CD4-positive, alpha-beta memory T cell (primary cell): ENCODE measurements at regions of chr1 and their contacts with region 1.

Region 1: DNA sequence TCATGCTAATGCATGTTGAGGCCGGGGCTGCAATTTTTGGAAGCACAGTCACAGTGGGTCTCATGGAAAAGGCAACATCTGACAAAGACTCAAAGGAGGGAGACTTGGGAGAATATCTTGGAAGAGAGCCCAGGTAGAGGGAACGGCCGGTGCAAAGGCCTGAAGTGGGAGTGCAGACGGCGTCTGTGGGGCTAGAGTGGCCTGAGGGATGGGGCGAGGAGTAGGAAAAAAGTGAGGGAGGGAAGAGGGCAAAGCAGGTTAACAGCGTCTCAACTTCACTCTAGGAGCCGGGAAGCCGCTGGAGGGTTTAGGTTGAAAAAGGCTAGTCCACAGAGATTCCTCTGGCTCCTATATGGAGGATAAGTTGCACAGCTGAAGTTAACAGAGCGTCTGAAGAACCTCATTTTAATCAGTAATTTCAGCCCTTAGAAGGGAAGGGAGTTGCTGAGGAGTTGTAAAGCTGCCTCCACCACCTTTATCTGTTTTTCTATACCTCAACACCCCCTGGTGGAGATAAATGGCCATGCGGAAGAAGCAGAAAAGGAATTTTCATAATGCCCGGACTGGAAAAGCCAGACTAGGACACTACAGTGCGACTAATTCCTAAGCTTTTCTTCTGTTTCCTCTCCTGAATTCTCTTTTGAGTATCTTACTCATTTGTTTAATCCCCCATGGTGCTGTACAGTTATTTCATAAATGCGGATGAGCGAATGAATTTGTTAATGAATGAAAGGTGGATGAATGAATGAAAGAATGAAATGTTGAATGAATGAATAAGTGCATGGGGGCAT is 78.7 kb upstream of the ZNF281 start:
- DNase-seq: peak in 4 of 5 donors; percentile 42 to 54 (median 52)
- H3K4me3 ChIP-seq: no peak overlapping the region
- H3K4me3 Mint-ChIP-seq: no peak overlapping the region
- H3K27ac ChIP-seq: no peak overlapping the region
- H3K27ac Mint-ChIP-seq: no peak overlapping the region
- H3K4me1 ChIP-seq: no peaks in the 10 kb centered on the region
- H3K4me1 Mint-ChIP-seq: peaks cover 0 to 5% (median under 1%) of the 10 kb centered on the region in 4 donors
- H3K27me3 ChIP-seq: no peaks in the 10 kb centered on the region
- H3K27me3 Mint-ChIP-seq: peaks cover 6 to 14% of the 10 kb centered on the region in 2 donors

Region 2: GRCh38 chr1:198858033-198858432 is 1630.5 kb before region 1 on chr1:
- CTCF ChIA-PET with region 1: no interaction called
- POLR2A ChIA-PET with region 1: no interaction called
- intact Hi-C with region 1: no loop called
- DNase-seq: no peak
- H3K4me3 ChIP-seq: no peak overlapping the region
- H3K4me3 Mint-ChIP-seq: no peak overlapping the region
- H3K27ac ChIP-seq: no peak overlapping the region
- H3K27ac Mint-ChIP-seq: no peak overlapping the region
- H3K4me1 ChIP-seq: no peaks in the 10 kb centered on the region
- H3K4me1 Mint-ChIP-seq: no peaks in the 10 kb centered on the region
- H3K27me3 ChIP-seq: no peaks in the 10 kb centered on the region
- H3K27me3 Mint-ChIP-seq: no peaks in the 10 kb centered on the region

Region 3: GRCh38 chr1:198892065-198892464 is 1596.5 kb before region 1 on chr1:
- CTCF ChIA-PET with region 1: no interaction called
- POLR2A ChIA-PET with region 1: no interaction called
- intact Hi-C with region 1: no loop called
- DNase-seq: no peak
- H3K4me3 ChIP-seq: no peak overlapping the region
- H3K4me3 Mint-ChIP-seq: no peak overlapping the region
- H3K27ac ChIP-seq: no peak overlapping the region
- H3K27ac Mint-ChIP-seq: no peak overlapping the region
- H3K4me1 ChIP-seq: no peaks in the 10 kb centered on the region
- H3K4me1 Mint-ChIP-seq: no peaks in the 10 kb centered on the region
- H3K27me3 ChIP-seq: no peaks in the 10 kb centered on the region
- H3K27me3 Mint-ChIP-seq: no peaks in the 10 kb centered on the region

Region 4: DNA sequence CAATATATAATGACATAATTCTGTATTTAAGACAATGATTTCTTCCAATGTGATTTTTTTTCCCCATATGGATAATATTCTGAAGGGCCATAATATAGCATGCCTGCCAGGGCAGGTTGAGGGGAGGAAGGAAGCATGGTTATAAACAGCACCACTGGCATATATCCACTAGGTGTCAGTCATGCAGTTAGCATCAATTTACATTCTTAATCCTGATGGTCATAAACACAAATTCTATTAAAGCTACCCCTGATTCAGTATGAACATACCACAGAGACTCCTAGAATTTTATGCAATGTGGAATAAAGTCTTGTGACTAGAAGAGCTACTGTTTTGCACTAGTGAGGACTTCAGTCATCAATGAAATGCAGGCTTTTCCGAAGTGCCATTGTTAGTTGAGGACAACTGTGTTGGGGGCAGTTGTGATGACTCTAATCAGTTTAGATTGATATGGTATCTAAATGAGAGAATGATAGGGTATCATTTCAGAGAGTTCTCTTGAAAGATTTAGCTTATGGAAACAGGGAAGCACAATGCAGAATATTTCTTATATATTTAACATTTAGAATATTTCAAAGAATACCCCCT is 803.8 kb before region 1 on chr1:
- CTCF ChIA-PET with region 1: interaction called, 12 read pairs
- POLR2A ChIA-PET with region 1: no interaction called
- intact Hi-C with region 1: no loop called
- DNase-seq: peak in 4 of 5 donors; percentile 23 to 34 (median 32)
- H3K4me3 ChIP-seq: no peak overlapping the region
- H3K4me3 Mint-ChIP-seq: no peak overlapping the region
- H3K27ac ChIP-seq: no peak overlapping the region
- H3K27ac Mint-ChIP-seq: no peak overlapping the region
- H3K4me1 ChIP-seq: no peaks in the 10 kb centered on the region
- H3K4me1 Mint-ChIP-seq: no peaks in the 10 kb centered on the region
- H3K27me3 ChIP-seq: no peaks in the 10 kb centered on the region
- H3K27me3 Mint-ChIP-seq: peaks cover 6 to 7% of the 10 kb centered on the region in 2 donors

Region 5: GRCh38 chr1:200099040-200099439 is 389.5 kb before region 1 on chr1:
- CTCF ChIA-PET with region 1: no interaction called
- POLR2A ChIA-PET with region 1: no interaction called
- intact Hi-C with region 1: loop called (anchors 1 kb)
- DNase-seq: no peak
- H3K4me3 ChIP-seq: no peak overlapping the region
- H3K4me3 Mint-ChIP-seq: no peak overlapping the region
- H3K27ac ChIP-seq: no peak overlapping the region
- H3K27ac Mint-ChIP-seq: no peak overlapping the region
- H3K4me1 ChIP-seq: no peaks in the 10 kb centered on the region
- H3K4me1 Mint-ChIP-seq: no peaks in the 10 kb centered on the region
- H3K27me3 ChIP-seq: no peaks in the 10 kb centered on the region
- H3K27me3 Mint-ChIP-seq: peaks cover 1% of the 10 kb centered on the region in 2 donors

Region 6: DNA sequence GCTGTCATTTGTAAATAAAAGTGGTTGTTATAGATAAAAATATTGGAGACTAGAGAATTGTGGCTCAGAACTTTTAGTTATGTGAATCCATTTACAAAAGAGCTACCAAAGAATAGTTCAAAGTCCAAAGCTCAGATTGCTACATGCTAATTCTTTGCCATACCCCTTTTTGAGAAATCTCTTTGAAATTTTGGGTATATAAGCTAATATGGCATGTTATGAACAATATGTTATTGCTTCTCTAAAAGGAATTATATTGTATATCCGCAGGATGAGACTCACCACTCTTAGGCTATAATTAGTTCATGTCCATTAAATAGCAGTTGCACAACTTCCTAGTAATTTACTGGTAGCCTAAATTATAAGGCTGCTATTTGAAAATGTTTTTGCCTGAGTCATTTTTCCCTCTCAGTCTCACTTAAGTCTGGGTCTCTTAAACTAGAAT is 256.8 kb before region 1 on chr1:
- CTCF ChIA-PET with region 1: no interaction called
- POLR2A ChIA-PET with region 1: no interaction called
- intact Hi-C with region 1: no loop called
- DNase-seq: no peak
- H3K4me3 ChIP-seq: no peak overlapping the region
- H3K4me3 Mint-ChIP-seq: no peak overlapping the region
- H3K27ac ChIP-seq: no peak overlapping the region
- H3K27ac Mint-ChIP-seq: no peak overlapping the region
- H3K4me1 ChIP-seq: peaks cover 3% of the 10 kb centered on the region
- H3K4me1 Mint-ChIP-seq: peaks cover 2 to 8% (median 4%) of the 10 kb centered on the region in 4 donors
- H3K27me3 ChIP-seq: no peaks in the 10 kb centered on the region
- H3K27me3 Mint-ChIP-seq: peaks cover 4 to 7% of the 10 kb centered on the region in 2 donors

Region 7: GRCh38 chr1:200258447-200259375 is 229.9 kb before region 1 on chr1:
- CTCF ChIA-PET with region 1: no interaction called
- POLR2A ChIA-PET with region 1: no interaction called
- intact Hi-C with region 1: loop called (anchors 1 kb)
- DNase-seq: peak in 2 of 5 donors; percentile 4 to 12
- H3K4me3 ChIP-seq: no peak overlapping the region
- H3K4me3 Mint-ChIP-seq: no peak overlapping the region
- H3K27ac ChIP-seq: no peak overlapping the region
- H3K27ac Mint-ChIP-seq: no peak overlapping the region
- H3K4me1 ChIP-seq: no peaks in the 10 kb centered on the region
- H3K4me1 Mint-ChIP-seq: peaks cover 0 to 4% (median 0%) of the 10 kb centered on the region in 4 donors
- H3K27me3 ChIP-seq: no peaks in the 10 kb centered on the region
- H3K27me3 Mint-ChIP-seq: peaks cover 0 to 12% of the 10 kb centered on the region in 2 donors

Region 8: DNA sequence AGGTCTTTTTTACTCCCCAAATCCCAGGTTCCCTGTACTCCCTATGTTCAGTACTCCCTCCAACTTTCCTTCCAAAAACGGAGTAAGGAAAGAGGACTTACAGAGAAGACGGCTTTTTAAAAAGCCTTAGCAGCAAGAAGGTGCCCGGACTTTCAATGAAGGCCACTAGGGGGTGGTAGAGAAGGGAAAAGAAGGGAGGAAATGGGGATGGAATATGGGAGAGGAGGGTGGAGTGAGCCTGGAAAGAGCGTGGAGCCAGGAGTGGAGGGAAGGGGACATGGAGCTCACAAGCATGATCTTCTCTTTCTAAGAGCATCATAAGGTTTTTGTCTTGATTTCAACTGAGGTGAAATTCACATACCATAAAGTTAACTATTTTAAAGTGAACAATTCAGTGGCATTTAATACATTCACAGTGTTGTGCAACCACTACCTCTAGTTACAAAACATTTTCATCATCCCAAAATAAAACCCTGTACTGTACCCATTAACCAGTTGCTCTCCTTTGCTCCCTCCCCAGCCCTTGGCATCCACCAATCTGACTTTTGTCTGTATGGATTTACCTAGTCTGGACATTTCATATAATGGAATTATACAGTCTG is 208.7 kb before region 1 on chr1:
- CTCF ChIA-PET with region 1: interaction called, 48 read pairs
- POLR2A ChIA-PET with region 1: no interaction called
- intact Hi-C with region 1: loop called (anchors 1 kb)
- DNase-seq: peak in 4 of 5 donors; percentile 3 to 24 (median 14)
- H3K4me3 ChIP-seq: no peak overlapping the region
- H3K4me3 Mint-ChIP-seq: no peak overlapping the region
- H3K27ac ChIP-seq: no peak overlapping the region
- H3K27ac Mint-ChIP-seq: no peak overlapping the region
- H3K4me1 ChIP-seq: no peaks in the 10 kb centered on the region
- H3K4me1 Mint-ChIP-seq: no peaks in the 10 kb centered on the region
- H3K27me3 ChIP-seq: no peaks in the 10 kb centered on the region
- H3K27me3 Mint-ChIP-seq: peaks cover 3 to 4% of the 10 kb centered on the region in 2 donors

Region 9: GRCh38 chr1:200290010-200290685 is 198.4 kb before region 1 on chr1:
- CTCF ChIA-PET with region 1: no interaction called
- POLR2A ChIA-PET with region 1: no interaction called
- intact Hi-C with region 1: no loop called
- DNase-seq: no peak
- H3K4me3 ChIP-seq: no peak overlapping the region
- H3K4me3 Mint-ChIP-seq: no peak overlapping the region
- H3K27ac ChIP-seq: no peak overlapping the region
- H3K27ac Mint-ChIP-seq: no peak overlapping the region
- H3K4me1 ChIP-seq: no peaks in the 10 kb centered on the region
- H3K4me1 Mint-ChIP-seq: no peaks in the 10 kb centered on the region
- H3K27me3 ChIP-seq: no peaks in the 10 kb centered on the region
- H3K27me3 Mint-ChIP-seq: peaks cover 0 to 2% of the 10 kb centered on the region in 2 donors

Region 10: GRCh38 chr1:200409761-200410565 is 78.6 kb before region 1 on chr1 and contains the start of gene ZNF281:
- CTCF ChIA-PET with region 1: no interaction called
- POLR2A ChIA-PET with region 1: no interaction called
- intact Hi-C with region 1: loop called (anchors 5 kb)
- DNase-seq: peak; percentile 92 to 95 (median 94)
- H3K4me3 ChIP-seq: peak within 1 kb of the TSS; percentile 70 to 87
- H3K4me3 Mint-ChIP-seq: peak within 1 kb of the TSS; percentile 98 to 99 (median 99)
- H3K27ac ChIP-seq: peak within 1 kb of the TSS; percentile 88
- H3K27ac Mint-ChIP-seq: peak within 1 kb of the TSS; percentile 93 to 98 (median 96)
- H3K4me1 ChIP-seq: peaks cover 41% of the 10 kb centered on the region
- H3K4me1 Mint-ChIP-seq: peaks cover 39 to 57% (median 49%) of the 10 kb centered on the region in 4 donors
- H3K27me3 ChIP-seq: no peaks in the 10 kb centered on the region
- H3K27me3 Mint-ChIP-seq: no peaks in the 10 kb centered on the region
- total RNA-seq, gene ZNF281: 23.1 to 24.1 TPM